Heart right ventricle (tissue), 16 donors: ENCODE measurements at regions of chr15 and their contacts with region 1.

Region 1: DNA sequence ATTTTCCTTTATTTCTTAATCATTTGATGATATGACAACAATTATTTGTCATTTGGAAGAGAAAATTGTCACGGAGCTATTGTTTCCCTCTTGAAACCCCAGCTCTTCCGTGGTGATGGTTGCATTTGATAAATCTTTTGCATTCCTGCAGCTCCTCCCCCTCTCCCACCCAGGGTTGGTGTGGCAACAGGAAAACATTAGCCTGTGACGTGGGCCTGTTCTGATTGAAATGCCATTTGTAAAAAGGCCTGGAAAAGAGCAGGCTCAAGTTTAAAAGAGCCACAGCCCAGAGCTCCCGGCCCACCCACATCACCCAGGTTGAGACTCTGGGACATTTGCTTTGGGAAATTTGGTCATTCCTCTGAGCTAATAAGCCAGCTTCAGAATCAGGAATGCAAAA is 282.5 kb downstream of the RPLP1 start:
- DNase-seq: no peak
- ATAC-seq: no peak
- H3K4me3 ChIP-seq: no peak overlapping the region
- H3K27ac ChIP-seq: no peak overlapping the region
- H3K4me1 ChIP-seq: peaks cover 0 to 9% (median 0%) of the 10 kb centered on the region in 9 donors
- H3K27me3 ChIP-seq: peaks cover 0 to 34% (median 12%) of the 10 kb centered on the region in 7 donors
- CTCF ChIP-seq: no peak

Region 2: DNA sequence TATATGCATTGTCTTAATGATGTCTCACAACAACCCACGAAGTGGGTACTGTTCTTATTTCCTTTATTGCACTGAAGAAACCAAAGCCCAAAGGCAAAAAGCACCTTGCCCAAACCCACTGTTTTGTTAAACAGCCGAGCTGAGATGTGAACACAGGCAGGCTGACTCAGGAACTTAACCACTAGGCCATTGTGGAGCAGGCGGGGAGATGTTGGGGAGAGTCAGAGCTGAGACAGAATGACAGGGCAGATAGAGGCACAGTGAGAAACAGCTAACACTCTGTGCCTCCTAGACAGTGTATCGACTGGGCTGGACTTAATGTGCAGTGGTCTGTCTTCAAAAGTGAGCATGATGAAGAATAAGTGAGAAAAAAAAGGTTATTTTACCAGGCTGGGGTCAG is 226.0 kb before region 1 on chr15:
- intact Hi-C with region 1: no loop called
- DNase-seq: no peak
- ATAC-seq: no peak
- H3K4me3 ChIP-seq: no peak overlapping the region
- H3K27ac ChIP-seq: no peak overlapping the region
- H3K4me1 ChIP-seq: no peaks in the 10 kb centered on the region
- H3K27me3 ChIP-seq: peaks cover 0 to 16% (median 4%) of the 10 kb centered on the region in 7 donors
- CTCF ChIP-seq: no peak

Region 3: GRCh38 chr15:69760890-69761568 is 25.9 kb after region 1 on chr15:
- intact Hi-C with region 1: no loop called
- DNase-seq: peak in 1 of 2 donors; percentile 20
- ATAC-seq: peak; percentile 47 to 91 (median 74)
- H3K4me3 ChIP-seq: peak overlapping the region in 1 of 10 donors; percentile 13
- H3K27ac ChIP-seq: peak overlapping the region in 2 of 10 donors; percentile 9 to 95
- H3K4me1 ChIP-seq: peaks cover 0 to 59% (median 0%) of the 10 kb centered on the region in 9 donors
- H3K27me3 ChIP-seq: peaks cover 0 to 28% (median 7%) of the 10 kb centered on the region in 7 donors
- CTCF ChIP-seq: no peak

Region 4: DNA sequence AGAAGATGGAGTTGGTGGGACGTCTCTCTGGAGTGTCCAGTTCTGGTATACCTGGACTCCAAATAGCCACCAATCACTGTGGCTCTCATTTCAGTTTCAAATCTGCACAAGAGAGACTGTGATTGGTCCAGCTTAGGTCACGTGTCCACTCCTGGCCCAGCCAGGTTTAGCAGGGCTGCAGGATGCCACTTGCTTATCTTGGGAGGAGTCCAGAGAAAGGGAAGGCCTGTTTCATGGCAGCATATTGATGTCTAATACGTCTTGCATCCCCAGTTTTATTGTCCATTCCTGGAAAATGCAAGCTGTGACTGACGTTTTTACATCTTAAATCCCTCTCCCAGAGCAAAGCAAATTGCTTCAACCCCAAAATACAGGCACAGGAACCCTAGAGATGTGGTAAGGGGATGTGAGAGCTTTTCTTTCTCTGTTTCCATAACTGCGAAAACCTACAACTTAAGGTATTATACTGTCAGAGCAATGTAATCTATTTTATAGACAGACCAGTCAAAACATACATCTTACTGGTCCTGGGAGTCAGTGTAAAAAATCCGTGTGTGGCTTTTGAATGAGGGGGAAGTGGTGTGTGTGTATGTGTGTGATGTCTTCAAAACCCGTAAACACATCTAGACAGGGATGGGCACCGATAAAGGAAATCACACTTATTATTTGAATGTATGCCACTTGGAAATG is 88.2 kb after region 1 on chr15:
- intact Hi-C with region 1: no loop called
- DNase-seq: no peak
- ATAC-seq: no peak
- H3K4me3 ChIP-seq: no peak overlapping the region
- H3K27ac ChIP-seq: no peak overlapping the region
- H3K4me1 ChIP-seq: no peaks in the 10 kb centered on the region
- H3K27me3 ChIP-seq: peaks cover 0 to 46% (median 13%) of the 10 kb centered on the region in 7 donors
- CTCF ChIP-seq: no peak

Region 5: DNA sequence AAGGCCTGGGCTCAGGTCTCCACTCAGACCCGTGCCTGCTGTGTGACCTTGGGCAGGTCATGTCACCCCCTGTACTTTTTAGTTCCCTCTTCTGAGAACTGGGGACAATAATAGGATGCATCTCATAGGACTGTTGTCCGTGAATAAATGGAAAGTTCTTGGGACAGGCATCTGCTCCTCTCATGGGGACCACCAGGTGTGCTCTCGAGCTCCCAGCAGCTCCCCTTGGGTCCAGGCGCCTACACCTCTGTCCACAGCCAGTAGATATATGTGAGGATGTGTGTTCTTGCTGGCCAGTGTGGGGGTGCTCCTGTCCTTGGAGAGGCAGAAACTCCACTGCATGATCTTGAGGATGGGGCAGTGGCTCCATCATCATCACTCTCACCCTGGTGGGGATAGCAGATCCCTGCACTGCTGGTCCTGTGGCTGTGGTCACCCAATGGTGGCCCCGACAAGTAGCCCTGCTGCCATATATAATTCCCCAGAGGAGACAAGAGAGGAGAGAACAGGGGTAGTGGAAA is 620.2 kb after region 1 on chr15:
- intact Hi-C with region 1: loop called in 3 of 10 experiments (anchors 10 kb)
- DNase-seq: no peak
- ATAC-seq: no peak
- H3K4me3 ChIP-seq: no peak overlapping the region
- H3K27ac ChIP-seq: no peak overlapping the region
- H3K4me1 ChIP-seq: no peaks in the 10 kb centered on the region
- H3K27me3 ChIP-seq: peaks cover 0 to 42% (median 12%) of the 10 kb centered on the region in 7 donors
- CTCF ChIP-seq: no peak

Region 6: GRCh38 chr15:70474471-70475396 is 739.6 kb after region 1 on chr15:
- intact Hi-C with region 1: loop called in 6 of 10 experiments (anchors 5 to 10 kb)
- DNase-seq: peak; percentile 32 to 63
- ATAC-seq: peak; percentile 54 to 74 (median 62)
- H3K4me3 ChIP-seq: peak overlapping the region in 7 of 10 donors; percentile 9 to 34 (median 25)
- H3K27ac ChIP-seq: peak overlapping the region in 8 of 10 donors; percentile 9 to 89 (median 49)
- H3K4me1 ChIP-seq: peaks cover 0 to 48% (median 16%) of the 10 kb centered on the region in 9 donors
- H3K27me3 ChIP-seq: peaks cover 0 to 22% (median 4%) of the 10 kb centered on the region in 7 donors
- CTCF ChIP-seq: no peak